ENCODE measurements at regions of chr2 and their contacts with region 1.

Region 1: DNA sequence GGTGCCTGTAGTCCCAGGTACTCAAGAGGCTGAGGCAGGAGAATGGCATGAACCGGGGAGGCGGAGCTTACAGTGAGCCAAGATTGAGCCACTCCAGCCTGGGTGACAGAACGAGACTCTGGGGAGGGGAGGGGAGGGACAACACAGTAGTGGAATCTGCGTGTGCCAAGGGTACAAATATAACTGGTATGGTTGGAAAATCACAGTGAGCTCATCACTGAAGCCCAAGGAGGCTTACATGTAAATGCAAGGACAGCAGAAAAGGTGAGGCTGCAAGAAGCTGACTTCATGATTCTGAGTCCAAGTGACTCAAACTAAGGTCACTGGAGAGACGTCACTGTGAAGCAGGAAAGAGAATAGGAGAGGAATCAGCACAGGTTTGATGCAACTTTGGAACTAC is 9.2 kb downstream of the SEPTIN10 start:
- DNase-seq: no peak
- ATAC-seq: no peak

Region 2: DNA sequence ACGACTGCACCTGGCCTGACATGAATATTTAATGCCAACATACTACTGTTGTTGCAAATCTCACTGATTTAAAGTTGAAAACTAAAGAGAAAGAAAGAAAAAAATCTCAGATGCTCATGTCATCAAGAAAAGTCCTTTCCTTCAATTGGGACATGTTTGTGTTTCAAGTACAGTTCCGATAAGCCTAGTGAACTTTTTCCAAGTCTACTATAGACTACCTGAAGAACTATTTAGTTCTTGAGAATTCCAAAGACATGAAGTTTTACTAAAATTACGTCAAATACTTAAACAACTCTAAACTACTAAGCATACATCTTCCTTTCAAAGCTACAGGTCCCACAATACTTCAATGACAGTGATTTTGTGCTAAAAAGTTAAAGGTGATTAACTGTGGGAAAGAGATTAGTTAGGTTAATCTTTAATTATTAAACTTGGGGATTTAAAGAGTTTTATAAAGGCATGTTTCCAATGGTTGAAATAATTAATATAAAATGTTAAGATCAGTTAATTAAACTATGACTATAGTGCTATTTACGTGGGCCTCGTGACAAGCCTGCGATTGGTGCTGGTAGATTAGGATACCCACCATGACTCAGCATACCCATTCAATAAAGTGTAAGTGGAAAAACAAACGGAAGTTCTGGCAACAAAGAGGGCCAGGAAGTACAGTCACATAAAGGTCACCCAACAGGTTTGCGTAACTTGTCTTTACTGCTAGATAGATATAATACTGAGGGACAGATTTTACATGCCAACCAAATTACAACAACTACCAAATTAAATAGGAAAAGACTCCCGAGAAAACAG is 46.3 kb before region 1 on chr2:
- intact Hi-C with region 1: loop called (anchors 10 kb)
- DNase-seq: no peak
- ATAC-seq: peak; percentile 32

Region 3: DNA sequence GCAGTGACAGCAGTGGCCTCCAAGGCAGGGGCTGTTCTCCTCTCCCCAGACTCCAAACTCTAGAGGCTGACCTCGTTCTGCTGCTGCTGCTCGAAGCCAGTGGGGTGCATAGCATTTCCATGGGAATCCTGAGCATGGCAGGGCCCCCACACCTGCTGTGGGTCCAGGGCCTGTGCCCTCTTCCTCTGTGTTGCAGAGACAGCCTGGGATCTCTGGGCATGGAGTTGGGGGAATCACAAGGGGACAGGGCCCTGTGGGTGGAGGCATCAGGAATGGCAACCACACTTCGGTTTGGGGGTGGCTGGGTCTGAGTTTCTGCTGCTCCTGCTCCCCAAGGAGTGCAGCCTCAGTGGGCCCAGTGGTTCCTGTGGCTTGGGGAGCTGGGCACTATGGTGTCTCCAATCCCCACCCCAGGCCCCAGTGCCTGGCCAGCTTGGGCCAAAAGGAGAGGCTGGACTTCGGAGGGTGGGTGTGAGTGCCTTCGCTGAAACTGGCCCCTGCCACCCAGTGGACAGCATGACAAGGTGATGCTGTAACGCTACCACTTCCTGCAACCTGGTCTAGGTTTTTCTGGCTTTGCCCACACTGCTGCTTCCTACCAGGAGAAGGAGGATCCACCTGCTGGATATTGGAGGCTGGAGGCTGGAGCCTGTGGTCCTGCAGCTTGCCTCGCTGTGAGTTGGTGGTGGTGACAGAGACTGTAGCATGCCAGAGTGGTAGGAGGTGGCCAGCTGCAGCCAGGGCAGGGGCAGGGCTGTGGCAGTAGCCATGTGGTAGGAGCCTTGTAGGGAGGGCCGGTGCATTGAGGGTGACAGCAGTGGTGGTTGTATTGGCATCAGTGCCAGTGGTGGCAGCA is 66.2 kb after region 1 on chr2:
- intact Hi-C with region 1: no loop called
- DNase-seq: peak; percentile 40
- ATAC-seq: no peak

Region 4: DNA sequence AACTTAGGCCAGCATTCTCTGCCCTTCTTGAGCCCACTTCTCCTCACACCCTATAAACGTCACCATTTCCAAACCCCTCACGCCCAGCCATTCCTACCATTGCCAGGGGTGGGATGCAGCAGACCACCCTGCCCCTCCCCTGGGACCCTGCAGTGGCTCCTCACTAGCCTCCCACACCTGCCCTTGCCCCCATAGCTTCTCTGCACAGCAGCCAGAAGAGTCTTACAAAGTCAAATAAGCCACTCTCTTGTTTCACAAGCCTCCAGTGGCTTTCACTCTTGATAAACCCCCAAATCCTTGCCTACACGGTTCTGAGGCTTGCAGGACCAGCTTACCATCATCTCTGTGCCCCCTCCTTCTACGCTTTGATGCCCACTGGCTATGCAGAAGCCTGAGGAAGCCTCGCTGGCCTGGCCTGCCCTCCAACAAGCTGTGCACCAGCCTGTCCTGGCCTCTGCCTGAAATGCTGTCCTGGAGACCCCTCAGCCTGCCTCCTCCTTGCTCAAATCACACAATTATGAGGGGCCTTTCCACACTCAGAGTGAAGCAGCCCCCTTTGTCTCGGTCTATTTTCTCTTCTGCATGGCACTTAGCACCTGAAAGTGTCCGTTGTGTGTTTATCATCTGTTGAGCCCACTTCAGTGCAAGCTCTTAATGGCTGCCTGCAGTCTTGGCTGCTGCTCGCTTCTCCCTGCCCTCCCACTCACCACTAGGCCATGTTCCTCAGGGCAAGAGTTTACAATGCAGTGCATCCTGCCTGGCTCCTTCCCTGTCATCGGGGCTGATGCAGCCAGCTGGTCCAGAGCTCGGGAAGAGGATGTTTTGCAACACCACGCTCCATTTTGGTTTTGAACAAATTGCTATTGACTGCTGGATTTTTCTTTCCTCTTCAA is 106.9 kb after region 1 on chr2:
- intact Hi-C with region 1: no loop called
- DNase-seq: peak; percentile 42
- ATAC-seq: no peak

Region 5: GRCh38 chr2:110173523-110173922 is 568.9 kb after region 1 on chr2:
- intact Hi-C with region 1: no loop called
- DNase-seq: no peak
- ATAC-seq: no peak

Measured in sciatic nerve (tissue), 2 donors.